Common myeloid progenitor, CD34-positive (primary cell): ENCODE measurements at regions of chr4 and their contacts with region 1.

Region 1: GRCh38 chr4:140078366-140078765 is 75.6 kb downstream of the MAML3 start:
- DNase-seq: no peak
- H3K4me3 ChIP-seq: no peak overlapping the region
- H3K27ac ChIP-seq: no peak overlapping the region
- H3K4me1 ChIP-seq: peaks cover 3 to 73% (median 55%) of the 10 kb centered on the region in 4 experiments
- H3K27me3 ChIP-seq: no peaks in the 10 kb centered on the region

Region 2: DNA sequence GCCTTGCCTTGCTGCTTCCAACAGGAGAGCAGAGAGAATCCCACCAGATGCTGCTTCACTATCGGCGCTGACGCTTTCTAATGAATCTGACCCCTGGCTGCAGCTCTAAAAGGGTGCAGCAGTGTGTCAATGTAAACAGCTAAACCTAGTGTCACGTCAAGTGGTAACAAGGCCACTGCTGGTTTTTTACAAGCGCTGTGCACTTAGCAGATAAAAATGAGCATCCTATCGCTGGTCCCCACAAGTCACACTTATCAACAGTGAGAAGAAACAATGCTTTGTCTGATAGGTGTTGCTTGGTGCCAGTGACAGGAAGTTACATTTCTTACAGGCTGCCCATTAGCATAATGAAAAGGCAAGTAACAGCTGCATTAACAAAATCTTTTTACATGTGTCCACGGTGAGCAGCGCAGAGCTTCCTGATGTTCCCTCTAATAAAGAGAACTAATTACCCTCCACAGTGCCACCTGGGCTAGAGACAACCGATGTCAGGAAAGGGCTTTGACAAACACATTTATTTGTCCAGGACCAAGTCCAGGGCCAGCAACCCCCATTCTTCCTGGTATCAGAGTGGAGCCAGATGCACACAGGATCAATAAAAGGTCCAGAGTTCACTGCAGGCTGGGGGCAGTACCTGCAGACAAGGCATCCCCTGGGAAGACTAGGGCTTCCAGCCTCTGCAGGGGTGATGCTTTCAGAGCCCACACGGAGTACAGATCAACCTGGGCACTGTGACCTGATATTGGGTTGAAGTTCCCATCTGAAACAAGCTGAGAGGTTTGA is 236.7 kb before region 1 on chr4:
- CTCF ChIA-PET with region 1: no interaction called
- POLR2A ChIA-PET with region 1: no interaction called
- DNase-seq: peak; percentile 74 to 92 (median 81)
- H3K4me3 ChIP-seq: no peak overlapping the region
- H3K27ac ChIP-seq: no peak overlapping the region
- H3K4me1 ChIP-seq: peaks cover 0 to 24% (median 14%) of the 10 kb centered on the region in 4 experiments
- H3K27me3 ChIP-seq: no peaks in the 10 kb centered on the region

Region 3: GRCh38 chr4:140090215-140090731 is 11.9 kb after region 1 on chr4:
- CTCF ChIA-PET with region 1: interaction called, 19 read pairs
- POLR2A ChIA-PET with region 1: interaction called, 4 read pairs
- DNase-seq: no peak
- H3K4me3 ChIP-seq: no peak overlapping the region
- H3K27ac ChIP-seq: no peak overlapping the region
- H3K4me1 ChIP-seq: peaks cover 34 to 64% (median 52%) of the 10 kb centered on the region in 4 experiments
- H3K27me3 ChIP-seq: no peaks in the 10 kb centered on the region